CD4-positive, alpha-beta T cell (primary cell): ENCODE measurements at regions of chr15 and their contacts with region 1.

Region 1: DNA sequence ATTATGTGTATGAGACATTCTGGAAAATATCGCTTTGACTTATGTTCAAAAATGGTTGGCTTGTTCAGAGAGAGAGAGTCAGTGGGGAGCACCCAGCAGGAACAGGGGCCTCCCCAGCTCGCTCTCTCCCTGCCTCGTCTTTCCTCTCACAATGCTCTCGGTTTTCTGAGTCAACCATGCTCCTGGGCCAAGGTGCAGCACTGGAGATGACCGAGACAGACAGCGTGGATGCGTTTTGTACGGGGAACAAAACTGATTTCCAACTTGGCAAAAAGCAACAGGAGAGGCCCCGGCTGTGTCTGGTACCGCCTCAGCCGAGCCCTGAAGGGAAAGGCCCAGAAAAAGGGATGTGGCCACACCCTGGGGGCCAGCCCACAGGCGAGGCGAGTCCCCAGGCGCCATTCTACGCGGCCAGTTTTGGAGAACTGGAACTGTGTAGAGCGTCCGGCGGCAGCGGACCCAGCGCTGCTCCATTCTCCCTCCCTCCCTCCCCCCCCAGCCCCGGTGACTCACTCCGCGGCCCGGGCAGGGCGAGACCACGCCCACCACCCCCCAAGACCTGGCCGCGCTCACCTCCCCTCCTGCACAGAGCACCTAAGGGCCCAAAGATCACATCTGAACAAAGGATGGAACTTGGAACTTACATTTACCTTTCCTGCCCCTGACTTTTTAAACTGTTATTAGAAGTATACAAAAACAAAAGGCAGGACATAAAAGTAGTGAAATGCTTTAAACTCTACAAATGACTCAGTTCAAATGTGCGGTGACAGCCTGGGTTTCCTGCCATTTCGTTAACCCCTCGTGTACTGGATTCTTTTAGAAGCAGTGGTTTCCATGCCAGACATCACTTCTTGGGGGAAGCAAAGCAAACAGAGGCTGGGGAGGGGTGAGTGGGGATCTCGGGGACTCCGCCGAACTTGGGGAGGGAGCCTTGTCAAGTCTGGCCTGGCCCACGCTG is 12.7 kb downstream of the ATP10A start:
- DNase-seq: peak; percentile 44 to 87 (median 70)
- ATAC-seq: peak; percentile 44
- H3K4me3 ChIP-seq: peak overlapping the region; percentile 64
- H3K4me3 Mint-ChIP-seq: peak overlapping the region; percentile 99
- H3K27ac ChIP-seq: peak overlapping the region; percentile 84 to 92
- H3K27ac Mint-ChIP-seq: peak overlapping the region; percentile 93
- H3K4me1 ChIP-seq: peaks cover 80% of the 10 kb centered on the region
- H3K4me1 Mint-ChIP-seq: peaks cover 94% of the 10 kb centered on the region
- H3K27me3 ChIP-seq: no peaks in the 10 kb centered on the region
- H3K27me3 Mint-ChIP-seq: no peaks in the 10 kb centered on the region
- CTCF ChIP-seq: no peak

Region 2: GRCh38 chr15:25811481-25811906 is 38.9 kb before region 1 on chr15:
- CTCF ChIA-PET with region 1: no interaction called
- POLR2A ChIA-PET with region 1: interaction called, 8 read pairs
- intact Hi-C with region 1: loop called in 1 of 2 experiments (anchors 5 kb)
- DNase-seq: peak in 5 of 14 experiments; percentile 8 to 44 (median 38)
- ATAC-seq: peak; percentile 11
- H3K4me3 ChIP-seq: peak overlapping the region; percentile 3
- H3K4me3 Mint-ChIP-seq: peak overlapping the region; percentile 79
- H3K27ac ChIP-seq: peak overlapping the region; percentile 25 to 54
- H3K27ac Mint-ChIP-seq: peak overlapping the region; percentile 92
- H3K4me1 ChIP-seq: peaks cover 42% of the 10 kb centered on the region
- H3K4me1 Mint-ChIP-seq: peaks cover 73% of the 10 kb centered on the region
- H3K27me3 ChIP-seq: no peaks in the 10 kb centered on the region
- H3K27me3 Mint-ChIP-seq: no peaks in the 10 kb centered on the region
- CTCF ChIP-seq: no peak